Heart left ventricle (tissue), 16 donors: ENCODE measurements at regions of chr19 and their contacts with region 1.

Region 1: GRCh38 chr19:10936661-10937084 is 8.1 kb downstream of the TIMM29 start:
- DNase-seq: no peak
- ATAC-seq: peak; percentile 60 to 84 (median 79)
- H3K4me3 ChIP-seq: peak overlapping the region in 2 of 12 donors; percentile 0 to 26
- H3K27ac ChIP-seq: no peak overlapping the region
- H3K4me1 ChIP-seq: peaks cover 0 to 8% (median 0%) of the 10 kb centered on the region in 12 donors
- H3K27me3 ChIP-seq: no peaks in the 10 kb centered on the region
- CTCF ChIP-seq: peak; percentile 45 to 63 (median 58)
- POLR2A ChIP-seq: no peak

Region 2: DNA sequence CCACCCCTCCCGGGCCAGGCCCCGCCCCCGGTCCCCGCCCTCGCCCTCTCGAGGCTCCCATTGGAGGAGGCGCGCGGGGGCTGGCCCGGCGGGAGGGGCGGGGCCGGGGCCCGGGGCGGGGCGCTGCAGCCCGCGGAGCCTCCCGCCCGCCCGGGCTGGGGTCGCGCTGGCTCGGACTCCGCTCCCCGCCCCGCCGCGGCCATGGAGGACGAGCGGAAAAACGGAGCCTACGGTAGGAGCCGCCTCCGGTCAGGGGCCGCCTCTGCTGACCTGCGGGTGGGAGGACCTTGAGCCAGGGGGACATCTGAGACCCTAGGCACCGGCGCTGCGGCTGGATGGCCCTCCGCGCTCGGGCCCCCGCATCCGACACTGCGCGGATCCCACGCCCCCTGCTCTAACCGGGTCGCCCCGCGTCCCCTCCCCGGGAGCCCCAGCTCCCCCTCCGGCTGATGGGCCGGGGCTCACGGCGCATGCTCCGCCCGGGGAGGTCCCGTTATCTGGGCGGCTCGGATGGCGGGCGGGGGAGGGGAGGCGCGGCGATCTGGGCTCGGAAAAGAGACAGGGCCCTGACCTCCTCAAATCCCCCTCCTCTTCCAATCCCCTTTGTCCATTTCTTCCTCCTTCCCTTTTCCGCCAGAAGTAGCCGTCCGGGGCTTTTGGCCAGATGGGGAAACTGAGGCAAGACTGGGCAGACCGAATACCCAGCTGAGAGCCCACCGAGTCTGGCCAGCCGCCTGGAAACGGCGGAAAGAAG is 334.2 kb before region 1 on chr19:
- intact Hi-C with region 1: no loop called
- DNase-seq: peak; percentile 87 to 93 (median 89)
- ATAC-seq: peak; percentile 87 to 99 (median 96)
- H3K4me3 ChIP-seq: peak overlapping the region; percentile 88 to 100 (median 100)
- H3K27ac ChIP-seq: peak overlapping the region; percentile 91 to 99 (median 97)
- H3K4me1 ChIP-seq: peaks cover 0 to 36% (median 22%) of the 10 kb centered on the region in 12 donors
- H3K27me3 ChIP-seq: no peaks in the 10 kb centered on the region
- CTCF ChIP-seq: no peak
- POLR2A ChIP-seq: peak in 1 of 2 donors; percentile 75

Region 3: DNA sequence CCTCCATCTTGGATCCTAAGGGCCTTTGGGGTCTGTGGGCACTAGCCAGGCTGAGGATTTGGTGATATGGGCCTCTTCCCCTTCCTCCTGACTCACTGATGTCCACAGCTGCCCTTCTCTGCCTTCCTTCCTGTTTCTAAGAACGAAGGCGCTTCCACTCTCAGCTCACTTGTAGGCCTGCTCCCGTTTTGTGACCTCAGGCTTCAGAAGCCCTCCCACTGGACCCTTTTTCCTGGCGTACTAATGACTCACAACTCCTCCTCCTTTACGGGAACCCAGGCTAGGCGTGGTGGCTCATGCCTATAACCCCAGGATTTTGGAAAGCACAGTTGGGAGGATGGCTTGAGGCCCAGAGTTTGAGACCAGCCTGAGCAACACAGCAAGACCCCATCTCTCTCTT is 156.3 kb before region 1 on chr19:
- intact Hi-C with region 1: no loop called
- DNase-seq: peak in 4 of 5 donors; percentile 63 to 76 (median 73)
- ATAC-seq: peak; percentile 30 to 83 (median 78)
- H3K4me3 ChIP-seq: no peak overlapping the region
- H3K27ac ChIP-seq: peak overlapping the region in 11 of 12 donors; percentile 59 to 96 (median 70)
- H3K4me1 ChIP-seq: peaks cover 0 to 85% (median 17%) of the 10 kb centered on the region in 12 donors
- H3K27me3 ChIP-seq: no peaks in the 10 kb centered on the region
- CTCF ChIP-seq: no peak
- POLR2A ChIP-seq: peak in 1 of 2 donors; percentile 31

Region 4: GRCh38 chr19:10848230-10848856 is 88.3 kb before region 1 on chr19 and contains the start of gene C19orf38:
- intact Hi-C with region 1: no loop called
- DNase-seq: no peak
- ATAC-seq: peak in 2 of 4 donors; percentile 60 to 69
- H3K4me3 ChIP-seq: peak within 1 kb of the TSS in 2 of 12 donors; percentile 7 to 45
- H3K27ac ChIP-seq: peak within 1 kb of the TSS in 1 of 12 donors; percentile 27
- H3K4me1 ChIP-seq: peaks cover 0 to 7% (median 0%) of the 10 kb centered on the region in 12 donors
- H3K27me3 ChIP-seq: peaks cover 0 to 8% (median 0%) of the 10 kb centered on the region in 9 donors
- CTCF ChIP-seq: no peak
- POLR2A ChIP-seq: no peak
- total RNA-seq, gene C19orf38: 0.21 to 6.0 (median 0.86) TPM

Region 5: DNA sequence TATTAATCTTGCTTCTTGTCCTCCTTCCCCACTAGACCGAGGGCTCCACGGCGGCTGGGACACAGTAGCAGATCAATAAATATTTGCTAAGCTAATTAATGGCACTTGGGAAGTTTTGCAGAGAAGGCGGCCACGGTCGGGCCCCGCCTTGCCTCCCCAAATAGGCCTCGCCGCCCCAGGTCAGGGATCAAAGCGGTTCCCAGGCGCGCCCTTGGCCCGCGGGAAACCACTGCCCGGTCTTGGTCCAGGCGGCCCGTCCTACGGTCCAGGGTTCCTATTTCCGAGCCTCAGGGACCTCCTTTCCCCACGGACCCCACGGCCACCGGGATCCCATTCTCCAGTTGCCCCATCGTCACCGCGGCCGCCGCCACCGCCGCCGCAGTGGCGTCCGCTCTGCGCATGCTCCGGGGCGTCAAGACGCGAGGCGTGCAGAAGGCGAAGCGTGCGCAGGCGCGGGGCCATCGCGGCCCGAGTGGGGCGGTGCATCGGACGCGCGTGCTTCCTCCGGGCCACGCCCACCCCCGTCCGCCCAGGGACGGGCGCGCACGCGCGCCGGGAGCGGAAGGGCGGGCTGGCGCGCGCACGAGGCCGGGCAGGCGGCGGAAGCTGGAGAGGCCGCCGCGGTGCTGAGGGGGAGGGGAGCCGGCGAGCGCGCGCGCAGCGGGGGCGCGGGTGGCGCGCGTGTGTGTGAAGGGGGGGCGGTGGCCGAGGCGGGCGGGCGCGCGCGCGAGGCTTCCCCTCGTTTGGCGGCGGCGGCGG is 23.8 kb after region 1 on chr19 and contains the start of gene SMARCA4:
- intact Hi-C with region 1: no loop called
- DNase-seq: peak; percentile 97 to 100 (median 98)
- ATAC-seq: peak; percentile 93 to 97 (median 96)
- H3K4me3 ChIP-seq: peak within 1 kb of the TSS; percentile 66 to 98 (median 91)
- H3K27ac ChIP-seq: peak within 1 kb of the TSS; percentile 92 to 99 (median 96)
- H3K4me1 ChIP-seq: peaks cover 0 to 23% (median 18%) of the 10 kb centered on the region in 12 donors
- H3K27me3 ChIP-seq: no peaks in the 10 kb centered on the region
- CTCF ChIP-seq: no peak
- POLR2A ChIP-seq: peak; percentile 34 to 93
- total RNA-seq, gene SMARCA4: 34.1 to 70.9 (median 48.3) TPM

Region 6: DNA sequence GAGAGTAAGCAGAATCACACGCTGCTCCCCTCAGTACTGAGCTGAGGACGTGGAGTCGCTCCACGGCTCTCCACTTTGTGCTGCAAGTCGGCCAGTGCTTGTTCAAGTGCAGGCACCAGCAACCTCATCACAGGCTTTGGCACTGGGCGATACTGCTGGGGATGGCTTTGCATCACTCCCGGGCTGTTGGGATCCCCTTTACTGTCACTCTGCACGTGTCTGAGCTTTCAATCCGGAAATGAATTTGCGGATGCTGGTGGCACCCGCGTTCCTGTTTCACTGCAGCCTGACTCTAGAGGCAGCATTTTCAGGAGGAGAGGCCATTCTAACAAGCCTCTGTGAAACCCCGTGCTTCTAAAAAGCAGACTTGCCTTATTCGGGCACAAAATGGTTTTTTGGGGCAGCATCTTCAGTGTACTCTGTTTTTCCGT is 43.3 kb after region 1 on chr19:
- intact Hi-C with region 1: loop called in 1 of 10 experiments (anchors 5 kb)
- DNase-seq: peak in 1 of 5 donors; percentile 45
- ATAC-seq: no peak
- H3K4me3 ChIP-seq: no peak overlapping the region
- H3K27ac ChIP-seq: peak overlapping the region in 1 of 12 donors; percentile 54
- H3K4me1 ChIP-seq: peaks cover 0 to 38% (median 27%) of the 10 kb centered on the region in 12 donors
- H3K27me3 ChIP-seq: no peaks in the 10 kb centered on the region
- CTCF ChIP-seq: no peak
- POLR2A ChIP-seq: no peak

Region 7: DNA sequence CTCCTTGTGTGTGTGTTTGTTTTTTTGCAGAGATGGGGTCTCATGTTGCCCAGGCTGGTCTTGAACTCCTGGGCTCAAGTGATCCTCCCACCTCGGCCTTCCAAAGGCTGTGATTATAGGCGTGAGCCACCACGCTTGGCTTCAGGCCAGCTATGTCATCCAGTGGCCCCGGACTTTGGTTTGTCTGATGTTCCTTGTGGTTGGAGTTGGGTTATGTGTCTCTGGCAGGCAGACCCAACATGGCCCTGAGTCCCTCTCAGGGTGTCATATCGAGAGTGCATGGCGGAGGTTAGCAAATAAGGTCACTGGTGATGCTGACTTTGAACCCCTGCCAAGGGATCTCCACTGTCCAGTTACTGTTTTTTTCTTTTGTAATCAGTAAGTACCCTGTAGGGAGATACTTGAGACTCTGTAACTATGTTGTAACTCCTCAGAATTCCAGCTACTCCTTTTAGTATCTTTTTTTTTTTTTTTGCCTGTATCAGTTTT is 61.4 kb after region 1 on chr19:
- intact Hi-C with region 1: loop called in 2 of 10 experiments (anchors 5 to 10 kb)
- DNase-seq: no peak
- ATAC-seq: no peak
- H3K4me3 ChIP-seq: no peak overlapping the region
- H3K27ac ChIP-seq: no peak overlapping the region
- H3K4me1 ChIP-seq: peaks cover 0 to 10% (median 0%) of the 10 kb centered on the region in 12 donors
- H3K27me3 ChIP-seq: no peaks in the 10 kb centered on the region
- CTCF ChIP-seq: no peak
- POLR2A ChIP-seq: no peak

Region 8: GRCh38 chr19:11203194-11204075 is 266.8 kb after region 1 on chr19:
- intact Hi-C with region 1: loop called in 1 of 10 experiments (anchors 10 kb)
- DNase-seq: peak; percentile 82 to 89 (median 88)
- ATAC-seq: peak; percentile 75 to 83 (median 78)
- H3K4me3 ChIP-seq: peak overlapping the region in 9 of 12 donors; percentile 1 to 43 (median 35)
- H3K27ac ChIP-seq: peak overlapping the region; percentile 78 to 97 (median 90)
- H3K4me1 ChIP-seq: peaks cover 0 to 42% (median 26%) of the 10 kb centered on the region in 12 donors
- H3K27me3 ChIP-seq: no peaks in the 10 kb centered on the region
- CTCF ChIP-seq: peak; percentile 72 to 94 (median 86)
- POLR2A ChIP-seq: no peak